ENCODE measurements at regions of chr15 and their contacts with region 1.

Region 1: GRCh38 chr15:92591275-92591674 is 64.3 kb downstream of the FAM174B start:
- DNase-seq: no peak
- ATAC-seq: peak; percentile 76

Region 2: DNA sequence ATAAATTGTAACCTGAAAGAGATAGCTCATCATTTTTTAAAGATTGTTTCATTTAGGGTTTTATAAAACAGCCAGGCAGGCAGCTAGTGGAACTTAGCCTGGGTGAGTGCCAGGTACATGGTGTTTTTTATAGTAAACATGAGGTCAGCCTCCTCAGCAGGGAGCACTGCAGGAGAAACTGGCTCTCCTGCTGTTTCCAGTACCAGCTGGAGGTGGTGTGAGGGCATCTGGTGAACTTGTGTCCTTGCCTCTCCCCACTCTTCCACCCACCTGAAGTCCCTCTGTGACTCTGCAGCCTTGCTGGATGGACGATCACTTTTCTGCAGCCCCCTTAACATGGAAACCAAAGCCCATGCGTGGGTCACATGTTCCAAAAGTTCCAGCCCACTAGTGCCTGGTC is 64.1 kb before region 1 on chr15:
- intact Hi-C with region 1: loop called (anchors 5 kb)
- DNase-seq: peak; percentile 46
- ATAC-seq: peak; percentile 93

Region 3: GRCh38 chr15:92693691-92694331 is 102.5 kb after region 1 on chr15:
- intact Hi-C with region 1: no loop called
- DNase-seq: no peak
- ATAC-seq: peak; percentile 27

Region 4: DNA sequence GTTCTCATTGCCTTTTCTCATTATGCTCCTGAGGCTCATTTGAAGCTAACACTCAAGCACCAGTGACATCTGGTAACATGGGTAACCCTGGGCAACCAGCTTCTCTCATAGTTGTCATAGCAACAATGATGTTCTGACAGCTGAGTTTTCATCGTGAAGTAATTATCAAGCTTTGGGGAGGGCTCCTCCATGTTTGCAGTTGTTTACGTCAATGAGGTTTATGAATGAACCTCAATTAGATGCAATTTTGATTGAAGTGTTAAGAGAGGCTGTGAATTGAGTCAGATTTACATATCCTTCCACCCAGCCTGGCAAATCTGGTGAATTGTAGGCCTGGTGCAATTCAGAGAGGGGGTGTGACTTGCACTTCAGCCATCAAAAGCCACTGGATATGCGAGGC is 189.6 kb after region 1 on chr15:
- intact Hi-C with region 1: no loop called
- DNase-seq: no peak
- ATAC-seq: no peak

Measured in Right ventricle myocardium superior (tissue), 1 donor.